ENCODE measurements at regions of chr19 and their contacts with region 1.

Region 1: GRCh38 chr19:461664-462551 is 1.1 kb upstream of the SHC2 start:
- H3K4me3 ChIP-seq: peak overlapping the region; percentile 44
- H3K27ac ChIP-seq: peak overlapping the region; percentile 42; the same call in 1 of the 2 replicates
- H3K4me1 ChIP-seq: no peaks in the 10 kb centered on the region
- CTCF ChIP-seq: no peak

Region 2: DNA sequence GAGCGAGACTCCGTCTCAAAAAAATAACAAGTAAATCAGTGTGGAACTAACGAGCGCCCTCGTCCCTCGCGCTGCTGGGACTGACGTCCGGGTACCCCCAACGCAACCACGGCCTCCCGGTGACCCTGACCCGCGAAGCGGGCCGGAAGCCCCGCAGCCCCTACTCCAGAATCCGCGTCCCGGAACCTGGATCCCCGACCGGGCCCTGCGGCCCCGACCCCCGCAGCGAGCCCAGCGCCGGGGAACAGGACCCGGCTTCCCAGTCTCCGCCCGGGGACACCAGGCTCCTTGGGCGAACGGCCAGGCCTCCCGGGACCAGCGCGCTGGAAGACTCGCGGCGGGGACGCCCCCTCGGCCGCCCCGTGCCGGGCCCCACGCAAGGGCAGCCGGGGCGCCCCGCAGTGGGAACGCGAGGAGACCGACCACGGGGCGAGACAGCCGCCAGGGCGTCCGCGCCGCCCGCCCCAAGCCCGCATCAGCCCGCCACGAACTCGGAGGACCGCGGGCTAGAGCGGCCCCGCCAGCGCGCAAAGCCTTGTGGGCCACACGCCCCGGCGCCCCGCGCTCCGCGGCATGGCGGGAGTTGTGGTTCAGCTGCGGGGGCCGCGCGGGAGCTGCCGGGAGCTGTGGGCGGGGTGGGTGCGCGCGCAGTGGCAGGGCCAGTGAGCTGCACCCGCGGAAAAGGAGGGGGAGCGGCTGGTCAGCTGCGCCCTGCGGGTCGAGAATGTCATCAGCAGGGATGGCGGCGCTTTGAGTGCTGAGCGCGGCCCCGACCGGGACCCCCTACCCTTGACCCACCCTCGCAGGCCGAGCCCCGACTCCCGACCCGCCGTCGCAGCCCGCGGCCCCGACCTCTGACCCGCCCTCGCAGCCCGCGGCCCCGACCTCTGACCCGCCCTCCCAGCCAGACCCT is 26.9 kb after region 1 on chr19:
- CTCF ChIA-PET with region 1: no interaction called
- POLR2A ChIA-PET with region 1: interaction called, 17 read pairs
- H3K4me3 ChIP-seq: peak overlapping the region; percentile 73
- H3K27ac ChIP-seq: peak overlapping the region; percentile 92
- H3K4me1 ChIP-seq: no peaks in the 10 kb centered on the region
- CTCF ChIP-seq: peak; percentile 27; the same call in 1 of the 2 replicates

Measured in HEK293 (cell line).